ENCODE measurements at regions of chr13 and their contacts with region 1.

Region 1: GRCh38 chr13:21476893-21477472 is 17.9 kb upstream of the ZDHHC20 start:
- DNase-seq: peak; percentile 84 to 88 (median 86)
- ATAC-seq: peak; percentile 89
- H3K4me3 ChIP-seq: peak overlapping the region in 1 of 2 donors; percentile 12
- H3K27ac ChIP-seq: peak overlapping the region in 1 of 4 donors; percentile 26
- H3K4me1 ChIP-seq: peaks cover 10% of the 10 kb centered on the region
- H3K27me3 ChIP-seq: no peaks in the 10 kb centered on the region
- CTCF ChIP-seq: peak; percentile 87 to 98 (median 95)
- POLR2A ChIP-seq: peak in 1 of 3 donors; percentile 36

Region 2: GRCh38 chr13:21106089-21106488 is 370.9 kb before region 1 on chr13:
- intact Hi-C with region 1: loop called (anchors 5 kb)
- DNase-seq: no peak
- ATAC-seq: no peak
- H3K4me3 ChIP-seq: no peak overlapping the region
- H3K27ac ChIP-seq: no peak overlapping the region
- H3K4me1 ChIP-seq: no peaks in the 10 kb centered on the region
- H3K27me3 ChIP-seq: no peaks in the 10 kb centered on the region
- CTCF ChIP-seq: no peak
- POLR2A ChIP-seq: no peak

Region 3: GRCh38 chr13:21297914-21298831 is 178.8 kb before region 1 on chr13:
- intact Hi-C with region 1: loop called (anchors 10 kb)
- DNase-seq: peak; percentile 86 to 90 (median 88)
- ATAC-seq: peak; percentile 98
- H3K4me3 ChIP-seq: peak overlapping the region; percentile 91 to 92
- H3K27ac ChIP-seq: peak overlapping the region; percentile 56 to 84 (median 72)
- H3K4me1 ChIP-seq: peaks cover 21% of the 10 kb centered on the region
- H3K27me3 ChIP-seq: no peaks in the 10 kb centered on the region
- CTCF ChIP-seq: peak; percentile 81 to 99 (median 93)
- POLR2A ChIP-seq: peak; percentile 31 to 58 (median 57)